SK-N-SH (cell line): ENCODE measurements at regions of chr1 and their contacts with region 1.

Region 1: DNA sequence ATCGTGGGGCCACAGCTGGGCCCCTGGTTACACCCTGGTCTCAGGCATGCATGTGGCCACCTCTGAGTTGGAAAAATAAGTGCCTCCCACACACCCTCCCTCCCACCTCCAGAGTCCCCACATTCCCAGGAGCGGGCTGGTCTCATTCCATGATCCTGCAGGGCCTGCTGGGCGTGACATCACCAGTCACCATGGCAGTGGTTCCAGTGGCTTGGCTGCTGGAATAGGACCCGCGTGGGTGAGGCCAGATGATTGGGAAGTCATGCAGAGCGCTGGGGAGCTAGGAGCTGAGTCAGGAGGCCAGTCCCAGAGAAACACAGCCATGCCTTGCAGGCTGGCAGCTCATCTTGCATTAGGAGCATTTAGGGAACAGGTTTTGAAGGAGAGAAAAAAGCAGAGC is 125.4 kb upstream of the TMEM51 start:
- DNase-seq: no peak
- H3K4me3 ChIP-seq: no peak overlapping the region
- H3K27ac ChIP-seq: no peak overlapping the region
- H3K4me1 ChIP-seq: no peaks in the 10 kb centered on the region
- H3K27me3 ChIP-seq: no peaks in the 10 kb centered on the region
- CTCF ChIP-seq: no peak
- EP300 ChIP-seq: no peak
- RAD21 ChIP-seq: no peak

Region 2: DNA sequence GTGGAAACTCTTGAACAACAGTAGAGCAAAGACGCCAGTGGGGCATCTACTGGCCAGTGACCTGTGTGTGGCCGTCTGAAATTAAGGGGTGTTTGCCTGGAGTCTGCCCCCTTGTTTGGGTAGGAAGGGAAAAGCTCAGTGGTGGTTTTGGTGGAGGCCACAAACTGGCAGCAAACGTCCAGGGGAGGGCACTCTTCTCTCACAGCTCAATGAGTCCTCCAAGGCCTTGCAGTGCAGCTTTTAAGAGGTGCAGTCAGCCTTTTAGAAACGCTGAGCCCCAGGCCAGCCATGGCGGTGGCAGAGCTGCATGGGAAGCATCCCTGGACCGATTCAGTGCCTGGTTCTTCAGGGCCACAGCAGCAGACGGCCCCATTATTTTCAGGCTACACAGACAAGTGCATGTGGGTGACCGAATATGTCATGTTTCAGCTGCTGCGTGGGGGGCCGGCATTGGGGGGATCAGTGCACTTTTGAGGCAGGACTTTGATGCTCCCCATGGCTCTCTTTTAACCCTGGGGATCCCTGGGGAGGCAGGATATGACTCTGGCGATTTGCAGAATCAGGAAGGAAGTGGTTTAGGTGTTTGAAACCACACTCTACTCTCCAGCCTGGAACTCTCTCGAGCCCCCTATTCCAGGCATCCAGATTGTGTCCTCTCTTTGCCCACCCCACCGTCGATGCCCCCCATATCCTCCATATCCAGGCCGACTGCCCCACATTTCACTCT is 914.1 kb before region 1 on chr1:
- CTCF ChIA-PET with region 1: interaction called, 10 read pairs
- POLR2A ChIA-PET with region 1: no interaction called
- DNase-seq: peak; percentile 51
- H3K4me3 ChIP-seq: peak overlapping the region in 1 of 2 experiments; percentile 47; a peak in 1 of 4 replicates
- H3K27ac ChIP-seq: no peak overlapping the region
- H3K4me1 ChIP-seq: no peaks in the 10 kb centered on the region; a peak in 1 of 4 replicates
- H3K27me3 ChIP-seq: no peaks in the 10 kb centered on the region
- CTCF ChIP-seq: no peak
- EP300 ChIP-seq: no peak
- RAD21 ChIP-seq: peak; percentile 78

Region 3: GRCh38 chr1:14923727-14924452 is 104.2 kb before region 1 on chr1:
- CTCF ChIA-PET with region 1: interaction called, 44 read pairs
- POLR2A ChIA-PET with region 1: no interaction called
- DNase-seq: peak; percentile 95
- H3K4me3 ChIP-seq: peak overlapping the region; percentile 16 to 71; a peak in 3 of 4 replicates
- H3K27ac ChIP-seq: no peak overlapping the region
- H3K4me1 ChIP-seq: peaks cover 0 to 11% of the 10 kb centered on the region in 2 experiments; a peak in 2 of 4 replicates
- H3K27me3 ChIP-seq: no peaks in the 10 kb centered on the region
- CTCF ChIP-seq: no peak
- EP300 ChIP-seq: no peak
- RAD21 ChIP-seq: no peak

Region 4: GRCh38 chr1:14968251-14968851 is 59.8 kb before region 1 on chr1:
- CTCF ChIA-PET with region 1: interaction called, 11 read pairs
- POLR2A ChIA-PET with region 1: interaction called, 3 read pairs
- DNase-seq: peak; percentile 88
- H3K4me3 ChIP-seq: no peak overlapping the region
- H3K27ac ChIP-seq: peak overlapping the region; percentile 92 to 93
- H3K4me1 ChIP-seq: peaks cover 12 to 31% of the 10 kb centered on the region in 2 experiments; a peak in 3 of 4 replicates
- H3K27me3 ChIP-seq: no peaks in the 10 kb centered on the region
- CTCF ChIP-seq: no peak
- EP300 ChIP-seq: peak; percentile 20 to 76; a peak in 3 of 4 replicates
- RAD21 ChIP-seq: peak; percentile 22; the same call in 1 of the 2 replicates

Region 5: DNA sequence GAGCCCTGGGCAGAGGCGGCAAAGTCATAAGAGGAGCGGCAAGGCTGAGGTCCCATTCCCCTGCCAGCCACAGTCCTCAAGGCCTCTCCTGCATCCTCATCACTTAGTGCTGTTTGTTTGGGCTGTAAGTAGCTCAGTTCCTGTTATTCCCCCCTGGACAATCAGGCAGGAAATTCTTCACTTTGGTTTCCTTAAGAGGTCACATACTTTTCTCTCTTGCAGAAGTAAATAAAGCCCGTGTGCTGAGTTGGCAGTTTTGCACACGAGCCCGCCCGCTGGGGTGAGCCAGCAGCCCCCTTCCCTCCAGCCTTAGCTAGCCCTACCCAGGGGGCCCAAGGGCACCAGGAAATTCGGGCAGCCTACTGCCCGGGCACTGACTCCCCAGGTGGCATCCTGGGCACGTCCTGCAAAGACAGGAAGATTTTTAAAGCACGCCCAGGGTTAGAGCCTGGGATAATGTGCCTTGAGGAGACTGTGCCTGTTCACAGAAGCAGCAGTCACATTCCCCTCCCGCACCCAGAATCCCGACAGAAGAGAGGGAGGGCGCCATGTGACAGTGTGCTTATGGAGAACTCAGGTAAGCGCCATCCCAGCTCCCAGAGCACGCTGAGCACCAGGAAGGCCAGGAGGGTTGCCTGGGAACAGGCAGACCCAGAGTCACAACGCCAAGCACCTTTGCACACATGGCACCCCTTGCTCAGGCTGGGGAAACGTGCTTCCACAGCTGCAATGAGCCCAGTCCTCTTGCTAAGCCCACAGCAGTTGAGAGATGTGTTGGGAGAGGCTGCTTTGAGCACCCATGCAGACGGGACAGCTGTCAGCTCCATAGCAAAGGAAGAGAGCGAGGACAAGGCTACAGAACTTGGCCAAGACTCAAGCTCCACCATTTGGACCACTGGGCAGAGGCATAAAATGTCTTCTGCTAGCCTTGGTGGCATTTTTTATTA is 19.0 kb before region 1 on chr1:
- CTCF ChIA-PET with region 1: interaction called, 10 read pairs
- POLR2A ChIA-PET with region 1: no interaction called
- DNase-seq: no peak
- H3K4me3 ChIP-seq: no peak overlapping the region
- H3K27ac ChIP-seq: no peak overlapping the region
- H3K4me1 ChIP-seq: no peaks in the 10 kb centered on the region
- H3K27me3 ChIP-seq: no peaks in the 10 kb centered on the region
- CTCF ChIP-seq: no peak
- EP300 ChIP-seq: no peak
- RAD21 ChIP-seq: no peak

Region 6: GRCh38 chr1:15038232-15039016 is 10.3 kb after region 1 on chr1:
- CTCF ChIA-PET with region 1: interaction called, 16 read pairs
- POLR2A ChIA-PET with region 1: no interaction called
- DNase-seq: peak; percentile 55
- H3K4me3 ChIP-seq: no peak overlapping the region; a peak in 1 of 4 replicates
- H3K27ac ChIP-seq: no peak overlapping the region
- H3K4me1 ChIP-seq: no peaks in the 10 kb centered on the region
- H3K27me3 ChIP-seq: no peaks in the 10 kb centered on the region
- CTCF ChIP-seq: peak; percentile 56
- EP300 ChIP-seq: no peak
- RAD21 ChIP-seq: peak; percentile 38